Activated B cell treated with CpG ODN at 0.5 μM for 24 hours (primary cell): ENCODE measurements at regions of chr2 and their contacts with region 1.

Region 1: DNA sequence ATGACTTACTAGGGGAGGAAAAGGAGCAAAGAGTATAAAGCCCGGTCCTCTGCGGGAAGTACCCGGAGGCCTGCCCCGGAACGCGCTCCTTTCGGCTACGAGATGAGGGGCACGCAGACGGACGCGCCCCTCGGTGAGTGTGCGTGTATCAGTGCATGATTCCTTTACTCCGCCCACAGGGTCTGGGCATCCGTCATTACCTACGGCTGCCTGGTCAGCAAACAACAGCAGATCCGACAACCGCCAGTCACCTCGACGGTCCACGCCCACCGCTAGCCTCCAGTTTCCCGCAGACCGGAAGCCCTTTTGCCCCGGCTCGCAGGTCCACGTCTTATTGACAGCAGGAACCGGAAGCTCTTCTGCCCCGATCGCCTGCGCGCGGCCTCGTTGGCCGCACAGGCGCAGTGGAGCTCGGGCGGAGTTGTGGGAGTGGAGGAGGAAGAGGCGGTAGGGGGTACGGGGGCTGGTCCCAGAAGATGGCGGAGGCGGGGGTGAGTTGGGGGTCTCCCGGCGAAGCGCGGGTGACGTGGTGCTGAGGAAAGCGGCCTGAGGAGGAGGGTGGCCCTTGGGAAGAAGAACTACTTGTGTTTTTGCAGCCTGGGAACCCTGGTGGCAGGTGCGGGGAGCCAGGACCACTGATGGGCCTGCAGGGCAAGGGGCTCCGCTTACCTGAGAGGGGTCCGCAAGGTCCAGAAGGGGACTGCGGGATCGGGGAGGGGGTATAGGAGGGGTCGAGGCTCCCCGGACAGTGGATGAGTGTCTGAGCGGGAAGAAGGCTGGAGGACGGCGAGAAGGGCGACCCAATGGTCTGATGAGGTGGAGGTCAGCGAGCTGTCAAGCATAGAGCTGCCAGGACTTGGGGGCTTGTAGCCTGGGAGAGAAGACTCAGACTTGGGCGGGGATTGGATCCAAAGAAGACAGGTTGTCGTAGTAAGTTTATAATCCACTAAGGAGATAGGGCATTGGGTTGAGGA is at the start of gene INSIG2:
- DNase-seq: peak; percentile 88
- ATAC-seq: peak; percentile 84
- H3K4me3 Mint-ChIP-seq: peak within 1 kb of the TSS; percentile 94
- H3K27ac Mint-ChIP-seq: peak within 1 kb of the TSS; percentile 84
- H3K4me1 Mint-ChIP-seq: peaks cover 32% of the 10 kb centered on the region
- H3K27me3 Mint-ChIP-seq: no peaks in the 10 kb centered on the region
- CTCF ChIP-seq: no peak
- total RNA-seq, gene INSIG2: 16.8 and 16.9 TPM in 2 replicates

Region 2: GRCh38 chr2:118056165-118056534 is 32.2 kb before region 1 on chr2:
- CTCF ChIA-PET with region 1: interaction called, 4 read pairs
- POLR2A ChIA-PET with region 1: interaction called, 18 read pairs
- intact Hi-C with region 1: loop called (anchors 1 kb)
- DNase-seq: peak; percentile 34
- ATAC-seq: peak; percentile 89
- H3K4me3 Mint-ChIP-seq: peak overlapping the region; percentile 66
- H3K27ac Mint-ChIP-seq: peak overlapping the region; percentile 90
- H3K4me1 Mint-ChIP-seq: peaks cover 63% of the 10 kb centered on the region
- H3K27me3 Mint-ChIP-seq: no peaks in the 10 kb centered on the region
- CTCF ChIP-seq: no peak

Region 3: DNA sequence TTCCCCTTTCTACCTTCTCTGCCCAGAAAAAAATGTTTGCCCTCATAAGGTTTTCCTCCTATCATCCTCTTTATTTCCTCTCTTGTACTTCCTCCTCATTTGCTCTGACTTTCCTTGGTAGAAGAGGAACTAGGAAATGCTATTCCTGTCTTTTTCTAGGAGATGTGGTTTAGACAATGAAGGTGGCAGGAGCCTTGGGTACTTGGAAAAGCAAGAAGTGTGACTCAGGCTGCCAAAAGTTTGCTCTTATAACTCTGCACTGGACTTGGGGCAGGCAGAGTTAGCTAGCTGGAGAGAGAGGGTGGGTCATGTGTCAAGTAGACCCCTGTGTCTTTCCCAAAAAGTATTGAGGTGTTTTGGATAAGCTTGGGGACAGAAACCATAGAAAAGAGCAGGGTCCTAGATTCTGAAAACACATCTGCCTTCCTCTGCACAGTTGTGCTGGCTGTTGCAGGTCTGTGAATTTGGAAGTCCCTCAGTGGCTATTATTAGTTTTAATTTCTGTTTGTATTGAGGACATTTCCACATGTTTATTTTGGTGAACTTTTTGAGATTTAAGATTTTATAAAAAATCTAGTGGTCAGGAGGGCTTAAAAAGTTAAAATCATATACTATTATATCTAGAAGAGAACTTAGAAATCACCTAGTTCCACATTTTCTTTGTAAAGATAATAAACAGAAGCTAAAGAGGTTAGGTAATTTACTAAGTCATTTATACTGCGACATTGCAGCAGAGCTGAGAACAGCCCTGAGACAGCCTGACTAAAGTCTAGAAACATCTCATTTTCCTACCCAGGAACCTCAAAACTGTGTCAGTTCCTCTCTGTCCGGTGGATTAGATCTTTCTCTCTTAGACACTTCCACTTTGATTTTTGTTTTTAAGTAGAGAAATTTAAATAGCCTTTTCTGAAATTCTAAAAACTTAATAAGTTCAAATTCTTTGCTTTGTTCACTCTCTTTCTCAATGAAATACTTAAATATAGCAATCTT is 15.9 kb after region 1 on chr2:
- CTCF ChIA-PET with region 1: no interaction called
- POLR2A ChIA-PET with region 1: interaction called, 4 read pairs
- intact Hi-C with region 1: loop called (anchors 2 kb)
- DNase-seq: no peak
- ATAC-seq: peak; percentile 60
- H3K4me3 Mint-ChIP-seq: no peak overlapping the region
- H3K27ac Mint-ChIP-seq: peak overlapping the region; percentile 61
- H3K4me1 Mint-ChIP-seq: peaks cover 13% of the 10 kb centered on the region
- H3K27me3 Mint-ChIP-seq: no peaks in the 10 kb centered on the region
- CTCF ChIP-seq: no peak

Region 4: GRCh38 chr2:118186110-118186857 is 97.9 kb after region 1 on chr2:
- CTCF ChIA-PET with region 1: no interaction called
- POLR2A ChIA-PET with region 1: interaction called, 7 read pairs
- intact Hi-C with region 1: loop called (anchors 1 kb)
- DNase-seq: peak; percentile 81
- ATAC-seq: peak; percentile 95
- H3K4me3 Mint-ChIP-seq: peak overlapping the region; percentile 97
- H3K27ac Mint-ChIP-seq: peak overlapping the region; percentile 98
- H3K4me1 Mint-ChIP-seq: peaks cover 16% of the 10 kb centered on the region
- H3K27me3 Mint-ChIP-seq: peaks cover under 1% of the 10 kb centered on the region
- CTCF ChIP-seq: no peak

Region 5: DNA sequence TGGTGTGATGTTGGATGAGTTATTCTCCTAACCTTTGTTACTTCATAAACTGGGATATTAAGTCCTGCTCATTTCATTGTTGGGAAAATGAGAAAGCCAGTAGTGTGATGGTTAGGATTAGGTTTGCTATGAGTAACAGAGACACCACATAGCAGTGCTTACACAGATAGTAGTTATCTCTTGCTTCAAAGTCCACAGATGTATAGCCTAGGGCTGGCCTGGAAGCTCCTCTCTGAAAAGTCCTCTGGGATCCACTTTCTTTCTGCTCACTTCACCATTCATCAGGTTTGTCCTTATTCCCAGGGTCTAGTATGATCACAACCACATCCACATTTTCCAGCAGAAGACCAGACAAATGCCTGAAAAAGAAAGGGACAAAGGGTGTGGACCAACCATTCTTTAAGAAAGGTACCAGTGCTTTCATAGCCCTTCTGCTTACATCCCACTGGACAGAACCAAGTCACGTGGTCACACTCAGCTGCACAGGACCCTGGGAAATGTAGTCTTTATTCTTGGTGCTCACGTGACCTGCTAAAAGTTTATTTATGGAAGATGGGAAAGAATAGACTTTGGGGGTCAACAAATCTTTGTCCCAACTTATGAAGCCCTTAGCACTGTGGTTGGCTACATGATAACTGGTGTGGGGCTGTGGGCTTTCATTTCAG is 108.8 kb after region 1 on chr2:
- CTCF ChIA-PET with region 1: no interaction called
- POLR2A ChIA-PET with region 1: no interaction called
- intact Hi-C with region 1: no loop called
- DNase-seq: no peak
- ATAC-seq: no peak
- H3K4me3 Mint-ChIP-seq: no peak overlapping the region
- H3K27ac Mint-ChIP-seq: no peak overlapping the region
- H3K4me1 Mint-ChIP-seq: no peaks in the 10 kb centered on the region
- H3K27me3 Mint-ChIP-seq: peaks cover 4% of the 10 kb centered on the region
- CTCF ChIP-seq: no peak

Region 6: DNA sequence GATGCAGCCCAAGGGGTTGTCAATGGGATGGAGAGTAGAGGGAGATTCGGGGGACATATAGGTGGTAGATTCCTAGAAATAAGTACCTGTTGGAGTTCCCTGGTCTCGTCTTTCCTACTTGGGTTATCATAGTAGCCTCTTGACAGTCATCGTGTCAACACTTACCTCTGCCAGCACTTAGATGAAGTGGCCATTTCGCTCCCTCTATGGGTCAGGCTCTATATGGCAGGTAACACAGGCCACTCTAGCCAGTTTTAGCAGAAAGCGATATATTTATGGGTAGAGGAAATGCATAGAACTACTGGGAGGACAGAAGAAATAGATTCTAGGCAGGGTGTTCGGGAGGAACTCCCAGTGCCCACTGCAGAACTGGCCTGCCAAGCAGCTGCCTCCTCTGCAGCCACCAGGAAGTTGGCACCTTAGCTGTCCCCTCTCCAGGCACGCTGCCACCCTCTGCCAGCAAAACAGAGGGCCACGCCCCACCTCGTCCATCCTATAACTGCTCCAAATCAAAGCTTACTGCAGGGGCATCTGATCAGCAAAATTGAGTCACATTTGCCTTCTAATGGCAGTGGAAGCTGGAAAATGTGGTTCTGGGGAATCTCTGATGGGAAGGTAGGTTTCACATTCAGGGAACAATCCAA is 181.2 kb after region 1 on chr2:
- CTCF ChIA-PET with region 1: no interaction called
- POLR2A ChIA-PET with region 1: no interaction called
- intact Hi-C with region 1: no loop called
- DNase-seq: no peak
- ATAC-seq: no peak
- H3K4me3 Mint-ChIP-seq: no peak overlapping the region
- H3K27ac Mint-ChIP-seq: no peak overlapping the region
- H3K4me1 Mint-ChIP-seq: no peaks in the 10 kb centered on the region
- H3K27me3 Mint-ChIP-seq: peaks cover 2% of the 10 kb centered on the region
- CTCF ChIP-seq: no peak